Heart right ventricle (tissue), 16 donors: ENCODE measurements at regions of chr10 and their contacts with region 1.

Region 1: GRCh38 chr10:50561816-50562215 is 61.9 kb downstream of the SGMS1 start:
- DNase-seq: no peak
- ATAC-seq: peak in 4 of 8 donors; percentile 15 to 29 (median 26)
- H3K4me3 ChIP-seq: no peak overlapping the region
- H3K27ac ChIP-seq: peak overlapping the region in 6 of 10 donors; percentile 4 to 62 (median 25)
- H3K4me1 ChIP-seq: peaks cover 10 to 48% (median 42%) of the 10 kb centered on the region in 9 donors
- H3K27me3 ChIP-seq: no peaks in the 10 kb centered on the region
- CTCF ChIP-seq: peak in 7 of 9 donors; percentile 36 to 61 (median 48)

Region 2: GRCh38 chr10:50336140-50336539 is 225.7 kb before region 1 on chr10:
- intact Hi-C with region 1: no loop called
- DNase-seq: no peak
- ATAC-seq: no peak
- H3K4me3 ChIP-seq: no peak overlapping the region
- H3K27ac ChIP-seq: no peak overlapping the region
- H3K4me1 ChIP-seq: peaks cover 0 to 9% (median 0%) of the 10 kb centered on the region in 9 donors
- H3K27me3 ChIP-seq: no peaks in the 10 kb centered on the region
- CTCF ChIP-seq: no peak

Region 3: DNA sequence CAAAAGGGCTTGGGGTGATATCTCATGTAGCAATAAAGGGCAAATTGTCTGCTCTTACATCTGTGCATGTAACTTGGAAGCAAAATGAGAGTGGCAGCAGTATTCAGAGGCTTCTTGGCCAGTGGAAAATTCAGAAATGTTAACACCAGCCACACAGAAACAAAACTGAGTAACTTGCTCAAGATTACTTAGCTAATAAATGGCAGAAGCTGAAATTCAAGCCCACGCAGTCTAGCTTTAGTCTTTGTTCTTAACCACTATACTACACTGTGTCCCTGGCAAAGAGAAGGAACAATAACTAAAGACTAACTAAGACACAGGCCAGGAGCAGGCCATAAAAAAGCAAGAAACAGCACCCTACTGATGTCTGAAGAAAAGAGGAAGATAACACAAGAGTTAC is 124.6 kb before region 1 on chr10:
- intact Hi-C with region 1: no loop called
- DNase-seq: no peak
- ATAC-seq: no peak
- H3K4me3 ChIP-seq: no peak overlapping the region
- H3K27ac ChIP-seq: peak overlapping the region in 1 of 10 donors; percentile 24
- H3K4me1 ChIP-seq: peaks cover 0 to 38% (median 2%) of the 10 kb centered on the region in 9 donors
- H3K27me3 ChIP-seq: no peaks in the 10 kb centered on the region
- CTCF ChIP-seq: no peak

Region 4: GRCh38 chr10:50605269-50606263 is 43.8 kb after region 1 on chr10:
- intact Hi-C with region 1: loop called in 3 of 10 experiments (anchors 2 to 10 kb)
- DNase-seq: peak in 1 of 2 donors; percentile 43
- ATAC-seq: peak; percentile 70 to 96 (median 78)
- H3K4me3 ChIP-seq: peak overlapping the region in 5 of 10 donors; percentile 2 to 40 (median 11)
- H3K27ac ChIP-seq: peak overlapping the region in 9 of 10 donors; percentile 42 to 81 (median 59)
- H3K4me1 ChIP-seq: peaks cover 0 to 84% (median 71%) of the 10 kb centered on the region in 9 donors
- H3K27me3 ChIP-seq: no peaks in the 10 kb centered on the region
- CTCF ChIP-seq: no peak